GM18951 (cell line): ENCODE measurements at regions of chr10 and their contacts with region 1.

Region 1: GRCh38 chr10:48759113-48759901 is 74.6 kb downstream of the WDFY4 start:
- POLR2A ChIP-seq: no peak

Region 2: DNA sequence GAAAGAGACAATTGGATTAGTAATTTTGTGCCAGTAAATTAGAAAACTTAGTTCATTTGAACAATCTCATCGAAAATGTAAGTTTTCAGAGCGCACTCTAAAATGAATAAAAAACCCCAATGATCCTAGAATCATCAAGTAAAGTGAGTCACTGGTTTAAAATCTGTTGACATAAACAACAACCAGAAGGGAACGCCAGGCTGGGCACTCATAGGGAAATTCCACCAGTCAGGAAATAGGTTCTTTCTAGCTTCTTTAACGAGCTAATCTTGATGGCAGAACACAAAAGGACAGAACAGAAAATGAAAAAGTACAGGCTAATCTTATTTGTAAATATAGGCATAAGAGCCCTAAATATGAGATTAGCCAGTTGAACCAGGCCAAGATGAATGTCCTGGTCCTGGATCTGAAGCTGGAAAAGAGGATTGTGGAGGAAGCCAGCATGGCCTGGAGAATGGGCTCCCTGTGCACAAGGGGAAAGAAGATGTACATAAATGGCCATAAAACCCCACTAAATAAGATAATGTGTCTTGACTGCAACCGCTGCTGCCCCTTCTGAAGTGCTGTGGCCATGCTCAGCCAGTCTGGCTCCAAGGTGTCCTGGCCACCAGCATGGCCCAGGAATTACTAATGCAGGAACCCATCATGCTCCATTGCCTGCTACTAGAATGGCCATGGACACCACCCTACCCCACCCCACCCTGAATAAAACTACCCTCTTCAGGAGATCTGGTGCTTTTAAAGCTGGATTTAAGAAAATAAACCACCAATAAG is 39.4 kb after region 1 on chr10:
- in situ Hi-C with region 1: loop called (anchors 5 kb)
- POLR2A ChIP-seq: no peak

Region 3: DNA sequence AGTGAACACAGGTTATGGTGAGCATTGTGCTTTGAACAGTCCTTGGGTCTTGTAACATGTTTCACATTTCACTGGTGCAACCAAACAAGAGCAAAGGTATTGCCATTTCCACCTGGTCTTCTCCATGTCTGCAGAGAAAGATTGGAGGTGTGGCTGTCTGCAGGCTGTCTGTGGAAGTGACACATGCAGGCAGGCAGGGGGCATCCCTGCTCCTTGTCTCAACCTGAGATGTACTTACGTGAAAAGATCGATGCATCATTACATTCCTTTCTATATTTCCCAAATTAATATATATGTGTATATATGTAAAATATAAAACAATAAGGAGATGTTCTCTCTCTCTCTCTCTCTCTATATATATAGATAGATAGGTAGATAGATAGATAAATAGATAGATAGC is 126.1 kb after region 1 on chr10:
- in situ Hi-C with region 1: no loop called
- POLR2A ChIP-seq: no peak